ENCODE measurements at regions of chr6 and their contacts with region 1.

Region 1: GRCh38 chr6:142913511-142914047 is 31.4 kb downstream of the HIVEP2 start:
- DNase-seq: peak; percentile 82
- ATAC-seq: peak; percentile 88
- H3K4me3 Mint-ChIP-seq: peak overlapping the region; percentile 65
- H3K27ac Mint-ChIP-seq: peak overlapping the region; percentile 97
- H3K4me1 Mint-ChIP-seq: peaks cover 86% of the 10 kb centered on the region
- H3K27me3 Mint-ChIP-seq: no peaks in the 10 kb centered on the region

Region 2: DNA sequence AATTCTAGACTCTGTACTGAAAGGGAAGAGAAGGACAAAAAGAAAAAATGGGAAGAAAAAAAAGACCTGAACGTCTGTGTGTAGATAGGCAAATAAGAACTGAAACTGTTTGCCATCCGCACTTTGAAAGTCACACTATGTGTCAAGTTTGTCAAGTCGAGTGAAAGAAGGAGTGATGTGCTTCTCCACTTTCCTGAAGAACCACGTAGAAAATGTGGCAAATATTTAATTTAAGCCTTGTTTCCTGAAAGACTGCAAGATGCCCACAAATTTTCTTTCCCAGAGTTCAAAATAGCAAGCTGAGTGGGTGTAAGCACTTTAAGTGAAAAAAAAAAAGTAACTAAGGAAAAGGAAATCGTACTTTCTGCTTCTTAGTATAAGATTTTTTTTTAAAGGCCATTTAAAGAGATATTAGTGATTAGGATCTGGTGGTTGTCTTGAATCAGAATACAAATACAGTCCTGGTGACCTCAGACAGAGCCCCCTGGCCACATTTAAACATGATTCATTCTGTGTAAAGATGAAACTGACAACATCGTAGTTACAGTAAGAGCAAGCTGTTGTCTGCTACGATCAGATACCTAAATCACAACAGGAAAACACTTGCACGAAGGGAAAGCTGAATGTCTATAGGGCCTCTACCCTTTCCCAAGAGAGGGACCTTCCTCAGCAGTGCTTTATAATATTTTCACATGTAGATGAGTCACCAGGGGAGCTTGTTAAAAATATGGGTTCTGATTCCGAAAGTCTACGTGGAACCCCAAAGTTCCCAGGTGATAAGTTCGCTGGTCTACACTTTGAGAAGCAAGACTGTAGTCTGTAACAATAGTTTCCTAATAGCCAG is 70.9 kb before region 1 on chr6:
- CTCF ChIA-PET with region 1: interaction called, 8 read pairs
- POLR2A ChIA-PET with region 1: interaction called, 11 read pairs
- intact Hi-C with region 1: loop called (anchors 1 kb)
- DNase-seq: peak; percentile 66
- ATAC-seq: peak; percentile 80
- H3K4me3 Mint-ChIP-seq: peak overlapping the region; percentile 71
- H3K27ac Mint-ChIP-seq: peak overlapping the region; percentile 97
- H3K4me1 Mint-ChIP-seq: peaks cover 89% of the 10 kb centered on the region
- H3K27me3 Mint-ChIP-seq: no peaks in the 10 kb centered on the region

Region 3: DNA sequence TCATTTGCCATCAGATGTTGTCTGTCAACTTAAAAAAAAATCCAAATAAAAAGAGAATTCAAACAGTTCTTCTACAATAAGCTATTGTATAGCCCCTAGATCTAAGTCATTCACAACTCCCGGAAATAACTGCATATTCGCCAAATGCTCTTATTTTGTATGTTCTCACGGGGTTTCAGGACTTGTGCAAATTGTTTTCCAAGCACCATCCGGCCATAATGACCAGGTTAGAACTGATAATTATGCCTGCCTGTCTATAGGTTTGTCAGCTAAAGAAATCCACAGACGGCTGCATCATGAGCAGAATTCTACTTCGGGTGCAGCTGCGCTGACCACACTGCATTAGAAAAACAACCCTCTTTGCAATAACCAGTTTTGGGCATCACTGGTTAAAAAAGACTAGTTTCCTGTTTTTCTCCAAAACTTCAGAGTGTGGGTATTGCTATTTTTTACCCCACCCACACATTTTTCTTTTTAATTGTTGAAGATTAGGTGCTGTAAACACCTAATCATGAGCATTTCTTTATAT is 56.3 kb before region 1 on chr6:
- CTCF ChIA-PET with region 1: interaction called, 3 read pairs
- POLR2A ChIA-PET with region 1: no interaction called
- intact Hi-C with region 1: loop called in 1 of 2 experiments (anchors 1 kb)
- DNase-seq: no peak
- ATAC-seq: no peak
- H3K4me3 Mint-ChIP-seq: peak overlapping the region; percentile 60
- H3K27ac Mint-ChIP-seq: peak overlapping the region; percentile 90
- H3K4me1 Mint-ChIP-seq: peaks cover 92% of the 10 kb centered on the region
- H3K27me3 Mint-ChIP-seq: no peaks in the 10 kb centered on the region

Region 4: GRCh38 chr6:142885182-142885867 is 28.3 kb before region 1 on chr6:
- CTCF ChIA-PET with region 1: interaction called, 4 read pairs
- POLR2A ChIA-PET with region 1: interaction called, 6 read pairs
- intact Hi-C with region 1: loop called (anchors 1 kb)
- DNase-seq: peak; percentile 55
- ATAC-seq: peak; percentile 82
- H3K4me3 Mint-ChIP-seq: peak overlapping the region; percentile 76
- H3K27ac Mint-ChIP-seq: peak overlapping the region; percentile 99
- H3K4me1 Mint-ChIP-seq: peaks cover 88% of the 10 kb centered on the region
- H3K27me3 Mint-ChIP-seq: no peaks in the 10 kb centered on the region